Activated CD8-positive, alpha-beta T cell treated with anti-CD3 and anti-CD28 coated beads for 36 hours (primary cell): ENCODE measurements at regions of chr14 and their contacts with region 1.

Region 1: DNA sequence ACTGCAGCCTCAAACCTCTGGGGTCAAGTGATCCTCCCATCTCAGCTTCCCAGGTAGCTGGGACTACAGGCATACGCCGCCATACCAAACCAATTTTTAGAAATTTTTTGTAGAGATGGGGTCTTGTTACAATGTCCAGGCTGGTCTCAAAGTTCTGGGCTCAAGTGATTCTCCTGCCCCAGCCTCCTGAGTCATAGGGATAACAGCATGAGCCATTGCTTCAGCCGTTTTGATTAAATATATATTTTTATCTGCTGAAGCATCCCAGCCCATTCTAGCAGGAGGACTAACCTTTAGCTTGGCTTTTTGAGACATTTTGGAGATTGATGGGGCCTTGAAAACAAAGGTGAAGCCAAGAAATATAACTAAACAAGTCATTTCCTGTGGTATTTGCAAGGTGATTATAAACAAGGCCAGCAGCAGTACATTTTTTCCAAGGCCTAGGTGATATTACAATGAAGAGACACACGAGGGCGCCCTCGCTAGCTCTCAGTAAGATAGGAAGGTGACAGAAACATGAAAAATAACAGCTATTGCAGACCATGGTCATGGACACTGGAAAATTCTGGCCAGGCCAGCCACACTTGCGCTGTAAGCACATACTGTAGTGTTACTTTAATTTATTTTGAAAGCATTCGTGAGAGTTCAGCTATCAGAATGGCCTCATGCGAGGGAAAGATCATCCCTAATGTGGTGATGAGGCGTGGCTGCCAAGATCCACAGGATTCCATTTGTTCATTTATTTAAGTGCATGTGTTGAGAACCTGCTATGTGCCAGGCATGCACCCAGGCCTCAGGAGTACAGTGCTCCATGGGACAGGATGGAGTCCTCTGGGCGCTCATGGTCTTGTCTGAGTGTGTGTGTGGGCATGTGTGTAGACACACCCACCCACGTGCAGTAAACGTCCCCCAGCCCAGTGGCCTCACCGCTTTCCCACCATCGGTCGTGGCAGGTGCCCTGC is 63.5 kb downstream of the DGLUCY start:
- DNase-seq: peak; percentile 84
- ATAC-seq: peak; percentile 95
- H3K4me3 Mint-ChIP-seq: no peak overlapping the region
- H3K27ac Mint-ChIP-seq: peak overlapping the region; percentile 89
- H3K4me1 Mint-ChIP-seq: peaks cover 16% of the 10 kb centered on the region
- H3K27me3 Mint-ChIP-seq: no peaks in the 10 kb centered on the region
- CTCF ChIP-seq: peak; percentile 90

Region 2: DNA sequence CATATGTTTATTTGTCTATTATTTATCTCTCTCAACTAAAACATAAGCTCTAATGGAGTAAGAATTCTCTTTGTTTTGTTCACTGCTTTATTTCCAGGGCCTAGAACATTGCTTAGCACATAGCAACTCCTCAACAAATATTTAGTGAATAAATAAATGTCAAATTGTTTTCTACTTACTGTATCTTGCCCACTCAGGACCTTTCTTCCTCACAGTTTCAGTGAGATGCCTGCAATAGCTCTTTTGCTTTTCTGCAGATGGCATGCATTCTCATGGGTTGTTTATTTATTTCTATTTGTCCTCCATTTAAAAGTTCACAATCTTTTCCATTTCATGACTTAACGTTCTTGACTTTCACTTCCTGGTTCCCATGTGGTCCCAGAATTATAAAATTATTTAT is 266.2 kb before region 1 on chr14:
- CTCF ChIA-PET with region 1: interaction called, 12 read pairs
- POLR2A ChIA-PET with region 1: no interaction called
- intact Hi-C with region 1: no loop called
- DNase-seq: no peak
- ATAC-seq: no peak
- H3K4me3 Mint-ChIP-seq: no peak overlapping the region
- H3K27ac Mint-ChIP-seq: peak overlapping the region; percentile 46
- H3K4me1 Mint-ChIP-seq: peaks cover 15% of the 10 kb centered on the region
- H3K27me3 Mint-ChIP-seq: no peaks in the 10 kb centered on the region
- CTCF ChIP-seq: no peak

Region 3: DNA sequence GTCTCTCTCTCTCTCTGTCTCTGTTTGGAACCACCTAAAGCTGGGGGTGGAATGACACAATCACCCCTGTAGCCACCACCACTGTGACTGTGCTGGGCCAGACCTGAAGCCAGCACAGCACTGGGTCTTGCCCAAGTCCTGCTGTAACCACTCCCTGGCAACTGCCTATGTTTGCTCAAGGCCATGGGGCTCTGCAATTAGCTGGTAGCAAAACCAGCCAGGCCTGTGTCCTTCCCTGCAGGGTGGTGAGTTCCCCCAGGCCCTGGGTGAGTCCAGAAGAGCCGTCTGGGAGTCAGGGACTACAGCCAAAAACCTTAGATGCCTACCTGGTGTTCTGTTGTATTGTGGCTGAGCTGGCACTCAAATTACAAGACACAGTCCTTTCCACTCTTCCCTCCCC is 12.7 kb before region 1 on chr14:
- CTCF ChIA-PET with region 1: interaction called, 29 read pairs
- POLR2A ChIA-PET with region 1: no interaction called
- intact Hi-C with region 1: no loop called
- DNase-seq: no peak
- ATAC-seq: no peak
- H3K4me3 Mint-ChIP-seq: no peak overlapping the region
- H3K27ac Mint-ChIP-seq: peak overlapping the region; percentile 2
- H3K4me1 Mint-ChIP-seq: no peaks in the 10 kb centered on the region
- H3K27me3 Mint-ChIP-seq: no peaks in the 10 kb centered on the region
- CTCF ChIP-seq: no peak

Region 4: GRCh38 chr14:91244501-91244901 is 67.1 kb after region 1 on chr14 and contains the start of gene GPR68:
- CTCF ChIA-PET with region 1: interaction called, 102 read pairs
- POLR2A ChIA-PET with region 1: interaction called, 23 read pairs
- intact Hi-C with region 1: no loop called
- DNase-seq: peak; percentile 49
- ATAC-seq: no peak
- H3K4me3 Mint-ChIP-seq: peak within 1 kb of the TSS; percentile 80
- H3K27ac Mint-ChIP-seq: peak within 1 kb of the TSS; percentile 97
- H3K4me1 Mint-ChIP-seq: peaks cover 87% of the 10 kb centered on the region
- H3K27me3 Mint-ChIP-seq: no peaks in the 10 kb centered on the region
- CTCF ChIP-seq: no peak
- total RNA-seq, gene GPR68: 11.9 to 14.0 TPM

Region 5: DNA sequence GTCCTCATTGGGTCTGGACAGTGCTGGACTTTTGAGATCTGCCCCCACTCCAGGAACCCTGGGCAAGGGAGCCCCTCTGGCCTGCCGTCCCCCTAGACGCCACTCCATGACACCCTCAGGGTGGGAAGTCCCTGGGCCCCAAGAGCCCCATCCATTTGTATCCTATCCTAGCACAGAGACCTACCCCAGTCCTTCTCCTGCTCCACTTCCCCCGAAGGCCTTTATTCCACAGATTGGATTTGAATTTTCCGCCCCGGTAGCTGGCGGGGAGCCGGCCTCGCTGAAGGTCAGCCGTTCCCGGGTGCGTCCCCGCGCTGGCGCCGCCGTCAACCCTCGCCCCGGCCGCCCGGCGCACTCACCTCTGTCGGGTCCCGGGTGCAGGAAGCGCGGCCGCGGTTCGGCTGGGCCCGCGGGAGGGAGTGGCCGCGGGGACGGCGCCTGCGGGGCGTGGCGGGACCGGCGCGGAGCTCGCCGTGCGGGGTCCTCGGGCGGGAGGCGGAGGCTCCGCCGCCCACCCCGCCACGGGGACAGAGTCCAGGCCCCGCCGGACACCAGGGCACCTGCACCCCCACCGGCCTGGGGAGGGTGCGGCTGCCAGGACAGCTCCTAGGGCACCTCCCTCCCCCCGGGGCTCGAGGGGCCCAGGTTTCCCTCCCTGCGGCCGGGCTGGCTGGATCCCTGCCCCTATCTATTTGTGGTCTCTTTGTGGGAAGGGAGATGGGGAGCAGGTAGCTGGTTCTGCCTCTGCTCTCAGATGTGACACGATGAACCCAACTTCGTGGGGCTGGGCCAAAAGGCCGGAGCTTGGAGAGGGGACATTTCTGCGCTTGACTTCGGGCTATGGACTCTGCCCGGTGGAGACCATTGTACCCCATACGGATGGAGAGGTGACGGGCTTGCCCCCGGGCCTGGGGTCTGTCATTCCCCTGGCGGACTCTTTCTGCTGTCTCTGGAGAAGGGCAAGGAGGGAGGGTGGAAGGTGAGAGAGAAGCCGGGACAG is 87.1 kb after region 1 on chr14:
- CTCF ChIA-PET with region 1: interaction called, 12 read pairs
- POLR2A ChIA-PET with region 1: interaction called, 3 read pairs
- intact Hi-C with region 1: no loop called
- DNase-seq: peak; percentile 32
- ATAC-seq: peak; percentile 32
- H3K4me3 Mint-ChIP-seq: peak overlapping the region; percentile 54
- H3K27ac Mint-ChIP-seq: peak overlapping the region; percentile 63
- H3K4me1 Mint-ChIP-seq: peaks cover 51% of the 10 kb centered on the region
- H3K27me3 Mint-ChIP-seq: no peaks in the 10 kb centered on the region
- CTCF ChIP-seq: no peak